Ascending aorta (tissue), 2 donors: ENCODE measurements at regions of chr6 and their contacts with region 1.

Region 1: DNA sequence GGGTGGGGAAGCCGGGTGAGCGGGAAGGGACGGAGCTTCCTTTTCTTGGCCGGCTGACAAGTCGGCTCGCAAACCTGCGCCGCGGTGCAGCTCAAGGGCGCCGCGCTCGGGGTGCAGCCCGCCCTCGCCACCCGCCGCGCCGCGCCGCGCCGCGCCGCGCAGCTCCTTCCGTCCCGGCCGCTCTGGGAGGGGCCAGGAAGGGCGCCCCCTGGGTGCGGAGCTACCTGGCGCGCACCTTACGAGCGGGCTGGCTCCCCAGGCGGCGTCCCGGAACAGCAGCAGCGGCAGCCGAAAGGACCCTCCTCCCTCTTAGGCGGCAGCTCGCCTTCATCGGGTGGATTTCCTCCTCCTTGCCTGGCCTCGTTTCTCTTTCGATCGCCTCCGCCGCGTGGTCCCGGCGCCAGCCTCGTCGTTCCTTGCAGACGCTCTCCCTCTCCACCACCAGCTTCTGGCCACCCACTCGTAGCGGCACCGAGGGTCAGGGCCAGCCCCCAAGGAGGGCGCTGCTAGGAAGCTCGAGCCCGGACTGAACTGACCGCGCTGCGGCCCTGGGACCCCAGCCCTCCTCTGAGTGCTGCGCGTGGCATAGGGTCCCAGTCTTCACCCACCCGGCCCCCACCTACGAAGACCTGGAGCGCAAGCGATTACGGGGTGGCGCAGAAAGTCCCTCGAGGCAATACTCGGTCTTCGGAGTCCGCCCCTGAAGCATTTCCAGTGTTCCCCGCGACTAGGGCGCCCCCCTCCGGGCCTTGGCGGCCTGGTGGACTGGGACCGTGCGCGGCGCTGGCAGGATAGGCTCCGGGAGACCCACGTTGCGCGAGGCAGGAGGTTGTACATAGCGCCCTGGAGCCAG is at the start of gene MAP3K5:
- DNase-seq: peak; percentile 77 to 98
- H3K4me3 ChIP-seq: peak within 1 kb of the TSS; percentile 74 to 81
- H3K27ac ChIP-seq: peak within 1 kb of the TSS; percentile 98 to 99
- H3K4me1 ChIP-seq: peaks cover 3 to 16% of the 10 kb centered on the region in 2 donors
- H3K27me3 ChIP-seq: no peaks in the 10 kb centered on the region
- CTCF ChIP-seq: peak; percentile 82 to 89 (median 85)
- total RNA-seq, gene MAP3K5: 40.9 TPM

Region 2: GRCh38 chr6:136563386-136564152 is 229.1 kb before region 1 on chr6:
- intact Hi-C with region 1: loop called (anchors 5 kb)
- DNase-seq: no peak
- H3K4me3 ChIP-seq: no peak overlapping the region
- H3K27ac ChIP-seq: peak overlapping the region; percentile 56 to 60
- H3K4me1 ChIP-seq: peaks cover 0 to 12% of the 10 kb centered on the region in 2 donors
- H3K27me3 ChIP-seq: no peaks in the 10 kb centered on the region
- CTCF ChIP-seq: no peak

Region 3: DNA sequence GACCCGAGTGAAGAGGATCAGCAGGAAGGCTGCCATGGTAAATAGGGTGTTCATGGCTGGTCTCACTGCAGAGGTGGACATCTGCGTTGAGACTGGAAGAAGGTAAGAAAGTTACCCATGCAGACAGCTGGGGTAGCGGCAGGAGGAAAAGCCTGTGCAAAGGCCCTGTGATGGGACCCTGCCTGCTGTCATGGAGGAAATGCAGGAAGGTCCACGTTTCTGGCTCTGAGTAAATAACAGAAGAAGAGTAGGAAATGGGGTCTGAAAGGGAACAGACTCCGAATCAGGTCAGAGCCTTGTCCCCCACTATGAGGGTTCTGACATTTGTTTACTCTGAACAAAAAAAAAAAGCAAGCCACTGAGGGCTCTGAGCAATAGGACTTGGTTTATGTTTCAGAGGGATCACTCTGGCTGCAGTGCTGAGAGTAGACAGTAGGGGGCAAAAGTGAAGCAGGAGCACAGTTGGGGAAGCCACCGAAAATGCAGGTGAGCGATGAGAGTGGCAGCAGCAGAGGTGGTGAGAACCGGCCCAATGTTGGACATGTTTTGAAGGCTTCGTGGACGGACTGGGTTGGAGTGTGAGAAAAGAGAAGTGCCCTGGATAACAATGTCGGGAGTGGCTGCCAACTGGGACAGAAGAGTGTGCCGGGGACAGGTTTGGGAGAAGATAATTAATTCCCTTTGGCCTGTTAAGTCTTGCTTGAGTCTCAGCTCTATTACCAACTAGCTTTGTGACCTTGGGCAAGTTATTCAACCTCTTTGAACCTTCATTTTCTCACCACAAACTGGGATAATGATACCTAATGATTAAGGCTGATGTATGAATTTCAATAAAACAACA is 184.5 kb before region 1 on chr6:
- intact Hi-C with region 1: loop called (anchors 1 kb)
- DNase-seq: peak in 1 of 2 donors; percentile 84
- H3K4me3 ChIP-seq: no peak overlapping the region
- H3K27ac ChIP-seq: peak overlapping the region; percentile 79 to 87
- H3K4me1 ChIP-seq: peaks cover 8 to 20% of the 10 kb centered on the region in 2 donors
- H3K27me3 ChIP-seq: no peaks in the 10 kb centered on the region
- CTCF ChIP-seq: peak; percentile 60 to 76 (median 68)

Region 4: GRCh38 chr6:136685540-136686108 is 107.0 kb before region 1 on chr6:
- intact Hi-C with region 1: loop called (anchors 5 kb)
- DNase-seq: no peak
- H3K4me3 ChIP-seq: no peak overlapping the region
- H3K27ac ChIP-seq: peak overlapping the region; percentile 43 to 68
- H3K4me1 ChIP-seq: peaks cover 4 to 27% of the 10 kb centered on the region in 2 donors
- H3K27me3 ChIP-seq: no peaks in the 10 kb centered on the region
- CTCF ChIP-seq: no peak

Region 5: DNA sequence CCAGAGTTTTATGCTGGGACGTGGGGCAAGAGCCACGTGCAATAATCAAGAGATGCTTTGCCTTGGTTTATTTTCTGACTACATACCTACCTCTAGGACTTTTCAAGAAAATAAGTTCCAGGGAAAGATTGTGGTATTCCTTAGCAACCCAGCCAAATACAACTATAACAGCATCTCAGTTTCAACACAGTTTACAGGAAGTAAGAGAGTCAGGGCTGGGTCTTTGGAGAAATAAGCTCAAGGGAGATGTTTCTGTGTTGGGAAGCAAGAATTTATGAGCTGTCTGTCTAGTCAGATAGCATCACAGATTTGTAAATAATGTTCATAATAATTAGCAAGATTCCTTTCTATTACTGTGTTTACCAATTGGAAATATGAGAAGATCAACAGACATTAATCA is 35.5 kb before region 1 on chr6:
- intact Hi-C with region 1: loop called (anchors 5 kb)
- DNase-seq: no peak
- H3K4me3 ChIP-seq: no peak overlapping the region
- H3K27ac ChIP-seq: peak overlapping the region; percentile 55 to 61
- H3K4me1 ChIP-seq: peaks cover 13 to 58% of the 10 kb centered on the region in 2 donors
- H3K27me3 ChIP-seq: no peaks in the 10 kb centered on the region
- CTCF ChIP-seq: no peak